ENCODE measurements at regions of chr11 and their contacts with region 1.

Region 1: DNA sequence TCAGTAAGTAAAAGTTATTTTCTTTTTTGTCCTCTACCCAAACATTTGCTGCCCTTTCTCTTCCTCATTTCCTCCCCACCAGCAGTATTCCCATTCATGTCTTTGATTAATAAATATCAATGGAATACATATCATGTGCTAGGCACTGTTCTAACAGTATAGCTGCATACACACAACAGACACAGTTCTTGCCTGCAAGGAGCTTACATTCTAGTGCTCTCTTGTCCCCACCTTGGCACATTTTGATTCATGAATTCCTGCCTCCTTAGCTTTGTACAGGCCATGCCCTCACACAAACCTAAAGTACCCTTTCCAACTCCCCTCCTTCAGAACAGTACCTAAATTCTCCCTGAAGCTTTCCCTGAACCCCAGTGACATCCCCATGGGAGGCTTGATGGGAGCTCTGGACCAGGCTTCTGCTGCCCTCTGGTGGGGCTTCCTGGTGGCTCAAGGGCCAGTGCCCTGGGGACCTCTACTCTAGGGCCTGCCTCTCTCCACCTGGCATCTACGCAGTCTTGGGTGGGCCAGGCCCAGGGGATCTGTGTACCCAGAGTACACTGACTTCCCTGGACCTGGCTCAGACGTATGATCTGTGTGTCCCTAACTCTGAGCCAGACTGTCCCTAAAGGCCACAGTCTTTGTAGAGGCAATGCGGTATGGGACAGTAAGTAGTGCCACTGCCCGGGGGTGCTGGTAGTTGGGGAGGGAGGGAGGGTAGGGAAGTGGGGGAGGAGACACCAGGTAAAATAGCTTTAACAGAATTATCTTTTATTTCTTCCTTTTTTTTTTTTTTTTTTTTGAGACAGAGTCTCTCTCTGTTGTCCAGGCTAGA is 14.1 kb downstream of the RPS13 start:
- DNase-seq: peak; percentile 80
- ATAC-seq: peak; percentile 89
- H3K4me3 Mint-ChIP-seq: no peak overlapping the region
- H3K27ac Mint-ChIP-seq: no peak overlapping the region
- H3K4me1 Mint-ChIP-seq: no peaks in the 10 kb centered on the region
- H3K27me3 Mint-ChIP-seq: no peaks in the 10 kb centered on the region

Region 2: DNA sequence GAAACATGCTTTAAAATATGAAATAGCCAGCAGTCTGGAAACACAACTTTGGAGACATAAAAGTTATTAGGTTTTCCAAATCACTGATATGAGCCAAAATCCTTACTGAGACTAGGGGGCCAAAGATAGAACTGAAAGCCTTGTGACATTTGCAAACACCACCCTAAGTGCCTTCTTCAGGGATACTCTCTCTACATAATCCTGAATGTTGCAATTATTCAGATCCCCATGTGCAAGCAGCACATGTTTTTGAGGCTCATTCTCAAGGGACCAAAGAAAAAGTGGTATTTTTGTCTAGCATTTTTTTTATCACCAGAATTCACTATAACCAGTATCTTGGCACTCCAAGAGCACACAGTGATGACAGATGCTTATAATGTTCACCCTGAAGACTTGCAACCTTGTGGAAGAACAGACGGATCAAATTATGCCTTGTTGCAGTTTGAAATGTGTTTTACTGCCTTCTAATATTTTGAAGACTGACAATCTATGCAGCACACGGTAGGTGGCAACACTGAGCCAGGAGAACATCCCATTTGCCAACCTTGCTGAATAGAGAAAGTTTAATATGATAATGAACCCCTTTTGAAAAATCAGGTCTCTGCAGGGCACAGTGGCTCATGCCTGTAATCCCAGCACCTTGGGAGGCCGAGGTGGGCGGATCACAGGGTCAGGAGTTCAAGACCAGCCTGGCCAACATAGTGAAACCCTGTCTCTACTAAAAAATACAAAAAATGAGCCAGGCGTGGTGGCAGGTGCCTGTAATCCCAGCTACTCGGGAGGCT is 127.7 kb before region 1 on chr11:
- CTCF ChIA-PET with region 1: interaction called, 14 read pairs
- POLR2A ChIA-PET with region 1: interaction called, 3 read pairs
- intact Hi-C with region 1: loop called in 1 of 2 experiments (anchors 1 kb)
- DNase-seq: peak; percentile 61
- ATAC-seq: peak; percentile 86
- H3K4me3 Mint-ChIP-seq: no peak overlapping the region
- H3K27ac Mint-ChIP-seq: no peak overlapping the region
- H3K4me1 Mint-ChIP-seq: no peaks in the 10 kb centered on the region
- H3K27me3 Mint-ChIP-seq: peaks cover 7% of the 10 kb centered on the region